ENCODE measurements at regions of chr22 and their contacts with region 1.

Region 1: DNA sequence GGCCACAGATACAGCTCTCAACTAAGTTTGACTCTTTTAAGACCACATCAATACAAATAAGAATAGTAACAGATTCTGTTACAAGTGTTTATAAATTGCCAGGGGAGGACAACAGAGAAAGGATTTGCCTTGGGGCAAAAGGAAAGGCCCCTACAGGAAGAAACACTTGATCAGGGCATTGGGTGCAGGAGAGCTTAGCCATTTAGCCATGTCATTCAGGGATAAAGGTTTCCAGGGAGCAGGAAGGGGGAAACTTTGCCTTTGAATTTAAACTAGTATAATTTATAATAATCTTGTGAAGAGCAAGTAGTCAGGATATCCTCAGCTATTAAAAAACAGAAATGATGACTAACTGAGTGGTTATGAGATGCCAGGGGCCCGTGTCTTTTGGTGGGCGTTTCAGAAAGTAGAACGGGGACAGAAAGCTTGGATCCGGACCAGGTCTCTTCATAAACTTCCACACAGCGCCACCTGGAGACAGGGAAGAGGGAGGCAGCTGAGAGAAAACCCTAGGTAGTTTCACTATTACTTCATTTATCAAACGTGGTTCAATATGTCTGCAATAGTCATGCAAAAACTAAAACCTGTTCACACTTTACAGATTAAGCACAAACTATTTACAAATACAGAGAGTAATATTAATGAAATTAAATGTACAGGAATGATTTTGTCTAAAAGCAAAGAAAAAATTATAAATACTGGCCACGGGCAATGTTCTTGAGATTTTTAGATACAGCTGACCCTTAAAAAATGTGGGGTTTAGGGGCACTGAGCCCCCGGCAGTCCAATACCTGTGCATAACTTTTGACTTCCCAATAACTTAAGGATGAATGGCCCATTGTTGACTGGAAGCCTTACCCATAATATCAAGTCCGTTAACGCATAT is 11.0 kb upstream of the SLC5A4 start:
- DNase-seq: peak; percentile 80
- H3K4me3 ChIP-seq: no peak overlapping the region
- H3K27ac ChIP-seq: no peak overlapping the region
- H3K4me1 ChIP-seq: no peaks in the 10 kb centered on the region
- H3K27me3 ChIP-seq: no peaks in the 10 kb centered on the region
- CTCF ChIP-seq: peak; percentile 92
- EP300 ChIP-seq: no peak
- RAD21 ChIP-seq: peak; percentile 79

Region 2: GRCh38 chr22:31917227-31917921 is 348.8 kb before region 1 on chr22:
- CTCF ChIA-PET with region 1: no interaction called
- POLR2A ChIA-PET with region 1: no interaction called
- DNase-seq: no peak
- H3K4me3 ChIP-seq: no peak overlapping the region
- H3K27ac ChIP-seq: no peak overlapping the region
- H3K4me1 ChIP-seq: peaks cover 0 to 9% of the 10 kb centered on the region in 2 experiments; a peak in 1 of 4 replicates
- H3K27me3 ChIP-seq: no peaks in the 10 kb centered on the region
- CTCF ChIP-seq: no peak
- EP300 ChIP-seq: no peak
- RAD21 ChIP-seq: no peak

Region 3: GRCh38 chr22:31977141-31977841 is 288.8 kb before region 1 on chr22:
- CTCF ChIA-PET with region 1: interaction called, 25 read pairs
- POLR2A ChIA-PET with region 1: no interaction called
- DNase-seq: peak; percentile 82
- H3K4me3 ChIP-seq: no peak overlapping the region; a peak in 1 of 4 replicates
- H3K27ac ChIP-seq: no peak overlapping the region
- H3K4me1 ChIP-seq: peaks cover 0 to 6% of the 10 kb centered on the region in 2 experiments; a peak in 1 of 4 replicates
- H3K27me3 ChIP-seq: no peaks in the 10 kb centered on the region
- CTCF ChIP-seq: peak; percentile 79
- EP300 ChIP-seq: no peak
- RAD21 ChIP-seq: peak; percentile 94

Region 4: DNA sequence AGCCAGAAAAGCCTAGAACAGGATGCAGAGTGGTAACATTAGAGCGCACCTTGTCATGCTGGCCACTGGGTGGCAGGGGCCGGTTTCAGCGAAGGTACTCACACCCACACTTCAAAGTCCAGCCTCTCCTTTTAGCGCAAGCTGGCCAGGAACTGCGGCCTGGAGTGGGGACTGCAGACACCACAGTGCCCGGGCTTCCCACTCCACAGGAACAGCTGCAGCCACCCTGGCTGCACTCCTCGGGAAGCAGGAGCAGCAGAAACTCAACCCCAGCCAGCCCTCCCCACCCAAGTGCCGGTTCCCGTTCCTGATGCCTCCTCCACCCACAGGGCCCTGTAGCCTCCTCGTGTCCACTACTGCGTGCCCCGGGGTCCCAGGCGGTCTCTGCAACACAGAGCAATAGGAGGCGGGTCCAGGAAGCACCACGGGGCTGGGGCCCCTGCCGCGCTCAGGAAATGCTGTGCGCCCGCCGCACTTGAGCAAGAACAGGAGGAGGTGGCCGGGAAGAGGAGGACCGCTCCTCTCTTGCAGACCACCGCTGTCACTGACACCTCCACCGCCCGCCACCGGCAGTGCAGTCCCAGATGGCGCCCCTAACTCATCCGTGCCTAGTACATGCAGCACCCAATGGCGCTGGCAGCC is 63.5 kb before region 1 on chr22:
- CTCF ChIA-PET with region 1: interaction called, 30 read pairs
- POLR2A ChIA-PET with region 1: no interaction called
- DNase-seq: peak; percentile 78
- H3K4me3 ChIP-seq: peak overlapping the region; percentile 56 to 58
- H3K27ac ChIP-seq: no peak overlapping the region
- H3K4me1 ChIP-seq: peaks cover 0 to 38% of the 10 kb centered on the region in 2 experiments; a peak in 1 of 4 replicates
- H3K27me3 ChIP-seq: peaks cover 18% of the 10 kb centered on the region; the same call in 1 of the 2 replicates
- CTCF ChIP-seq: peak; percentile 64
- EP300 ChIP-seq: 0 out of 4 replicates have a peak, but pooled peaks of 1 of the 2 experiments have one; percentile 26
- RAD21 ChIP-seq: peak; percentile 65

Region 5: GRCh38 chr22:32249231-32249630 is 16.9 kb before region 1 on chr22:
- CTCF ChIA-PET with region 1: interaction called, 11 read pairs
- POLR2A ChIA-PET with region 1: no interaction called
- DNase-seq: no peak
- H3K4me3 ChIP-seq: no peak overlapping the region
- H3K27ac ChIP-seq: no peak overlapping the region
- H3K4me1 ChIP-seq: no peaks in the 10 kb centered on the region
- H3K27me3 ChIP-seq: no peaks in the 10 kb centered on the region
- CTCF ChIP-seq: no peak
- EP300 ChIP-seq: no peak
- RAD21 ChIP-seq: no peak

Region 6: DNA sequence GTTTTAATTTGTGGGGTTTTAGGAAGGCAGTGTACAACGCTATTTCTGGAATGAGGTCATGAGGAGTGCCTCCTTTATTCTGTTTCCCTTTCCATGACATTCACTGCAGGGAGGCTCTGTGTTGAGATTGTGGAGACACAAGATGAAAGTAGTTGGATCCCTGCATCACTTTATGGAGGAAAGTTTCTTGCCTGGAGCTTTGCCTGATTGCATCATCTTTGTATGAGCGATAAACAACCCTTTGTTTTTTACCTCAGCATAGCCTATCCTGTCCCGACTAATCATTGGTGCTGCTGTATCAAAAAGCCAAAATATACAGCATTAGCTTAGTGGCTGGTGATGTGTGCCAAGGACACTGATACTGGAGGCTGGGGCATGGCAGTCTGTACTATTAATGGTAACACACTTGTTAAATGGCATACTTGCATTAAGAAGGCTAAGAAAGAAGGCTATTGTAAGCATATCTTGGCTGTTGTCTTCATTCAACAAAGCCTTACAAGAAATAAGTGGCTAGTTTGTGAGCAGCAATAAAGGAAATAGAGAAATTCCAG is 20.2 kb after region 1 on chr22:
- CTCF ChIA-PET with region 1: interaction called, 11 read pairs
- POLR2A ChIA-PET with region 1: no interaction called
- DNase-seq: no peak
- H3K4me3 ChIP-seq: no peak overlapping the region
- H3K27ac ChIP-seq: no peak overlapping the region
- H3K4me1 ChIP-seq: no peaks in the 10 kb centered on the region
- H3K27me3 ChIP-seq: no peaks in the 10 kb centered on the region
- CTCF ChIP-seq: no peak
- EP300 ChIP-seq: no peak
- RAD21 ChIP-seq: no peak